ENCODE measurements at regions of chr5 and their contacts with region 1.

Region 1: DNA sequence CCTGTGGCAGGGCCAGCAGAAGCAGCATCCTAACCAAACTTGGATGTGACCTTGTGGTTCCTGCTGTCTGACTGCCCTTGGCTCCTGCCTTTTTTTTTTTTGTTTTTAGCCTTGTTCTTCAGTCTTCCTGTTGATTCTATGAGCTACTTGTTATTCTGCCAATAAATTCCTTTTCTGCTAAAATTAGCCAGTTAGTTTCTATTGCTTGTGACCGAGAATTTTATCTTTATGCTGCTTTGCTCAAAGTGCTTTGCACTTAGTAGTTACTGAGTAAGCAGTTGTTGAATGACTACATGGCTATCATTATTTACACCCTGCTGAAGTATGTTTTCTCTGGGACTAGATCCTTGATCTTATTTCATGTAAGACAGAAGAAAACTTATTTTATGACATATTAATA is 20.8 kb upstream of the ATG10 start:
- DNase-seq: peak in 2 of 5 donors; percentile 28
- H3K4me3 ChIP-seq: no peak overlapping the region
- H3K27ac ChIP-seq: peak overlapping the region; percentile 9 to 73
- H3K4me1 ChIP-seq: peaks cover 2% of the 10 kb centered on the region
- H3K27me3 ChIP-seq: no peaks in the 10 kb centered on the region
- CTCF ChIP-seq: no peak
- EP300 ChIP-seq: no peak
- POLR2A ChIP-seq: no peak

Region 2: GRCh38 chr5:80125962-80126480 is 1825.0 kb before region 1 on chr5:
- intact Hi-C with region 1: loop called in 1 of 4 experiments (anchors 5 kb)
- DNase-seq: no peak
- H3K4me3 ChIP-seq: no peak overlapping the region
- H3K27ac ChIP-seq: no peak overlapping the region
- H3K4me1 ChIP-seq: peaks cover 3% of the 10 kb centered on the region
- H3K27me3 ChIP-seq: peaks cover 4% of the 10 kb centered on the region
- CTCF ChIP-seq: no peak
- EP300 ChIP-seq: no peak
- POLR2A ChIP-seq: no peak

Region 3: GRCh38 chr5:81980598-81981260 is 29.7 kb after region 1 on chr5:
- intact Hi-C with region 1: no loop called
- DNase-seq: no peak
- H3K4me3 ChIP-seq: no peak overlapping the region
- H3K27ac ChIP-seq: no peak overlapping the region
- H3K4me1 ChIP-seq: no peaks in the 10 kb centered on the region
- H3K27me3 ChIP-seq: no peaks in the 10 kb centered on the region
- CTCF ChIP-seq: no peak
- EP300 ChIP-seq: no peak
- POLR2A ChIP-seq: no peak

Measured in ovary (tissue), 10 donors.